A549 (cell line): ENCODE measurements at regions of chr9 and their contacts with region 1.

Region 1: GRCh38 chr9:124537926-124538325 is 30.7 kb upstream of the NR5A1 start:
- DNase-seq: no peak
- ATAC-seq: no peak
- H3K4me3 ChIP-seq: no peak overlapping the region
- H3K27ac ChIP-seq: no peak overlapping the region
- H3K4me1 ChIP-seq: no peaks in the 10 kb centered on the region
- CTCF ChIP-seq: no peak
- EP300 ChIP-seq: no peak
- POLR2A ChIP-seq: no peak
- RAD21 ChIP-seq: no peak

Region 2: DNA sequence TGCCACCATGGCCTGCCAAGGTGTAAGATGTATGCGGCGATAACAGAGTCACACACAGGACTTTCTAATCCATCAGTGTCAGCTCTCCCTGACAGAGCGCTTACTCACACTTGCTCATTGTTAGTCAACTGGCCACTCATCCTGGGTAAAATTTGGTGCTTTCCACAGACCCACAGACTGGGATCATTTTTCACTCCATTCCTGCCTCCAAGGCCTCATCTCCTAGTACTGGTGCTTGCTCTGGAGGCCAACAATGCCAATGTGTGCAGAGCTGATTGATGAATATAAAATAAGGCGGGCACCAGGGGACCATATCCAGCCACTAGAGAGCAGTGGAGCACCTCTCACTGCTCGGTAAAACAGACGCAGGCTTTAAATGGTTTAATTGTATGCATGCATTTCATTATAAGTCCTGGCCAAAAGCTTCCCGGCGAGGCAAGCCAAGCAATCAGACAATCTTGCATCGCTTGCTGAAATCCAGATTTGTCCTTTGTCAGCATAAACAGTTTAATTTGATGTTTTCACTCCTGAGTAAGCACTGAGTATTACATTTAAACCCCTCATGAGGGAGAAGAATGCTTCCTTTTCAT is 145.0 kb before region 1 on chr9:
- CTCF ChIA-PET with region 1: interaction called, 29 read pairs
- POLR2A ChIA-PET with region 1: no interaction called
- DNase-seq: peak; percentile 87 to 89
- ATAC-seq: peak; percentile 88
- H3K4me3 ChIP-seq: 0 out of 3 replicates have a peak overlapping the region, but pooled peaks have one; percentile 6
- H3K27ac ChIP-seq: peak overlapping the region; percentile 68 to 84
- H3K4me1 ChIP-seq: peaks cover 69% of the 10 kb centered on the region
- CTCF ChIP-seq: peak; percentile 56
- EP300 ChIP-seq: peak in 1 of 2 experiments; percentile 68; a peak in 2 of 5 replicates
- POLR2A ChIP-seq: no peak
- RAD21 ChIP-seq: peak; percentile 58 to 70; a peak in 4 of 5 replicates

Region 3: GRCh38 chr9:124503713-124504529 is 34.0 kb before region 1 on chr9:
- CTCF ChIA-PET with region 1: interaction called, 16 read pairs
- POLR2A ChIA-PET with region 1: no interaction called
- DNase-seq: no peak
- ATAC-seq: peak in 1 of 2 experiments; percentile 12; a peak in 3 of 6 replicates
- H3K4me3 ChIP-seq: peak overlapping the region; percentile 41
- H3K27ac ChIP-seq: peak overlapping the region in 1 of 2 experiments; percentile 47; a peak in 3 of 6 replicates
- H3K4me1 ChIP-seq: 0 out of 3 replicates have a peak, but pooled peaks cover 3% of the 10 kb centered on the region
- CTCF ChIP-seq: no peak
- EP300 ChIP-seq: no peak
- POLR2A ChIP-seq: no peak
- RAD21 ChIP-seq: no peak

Region 4: DNA sequence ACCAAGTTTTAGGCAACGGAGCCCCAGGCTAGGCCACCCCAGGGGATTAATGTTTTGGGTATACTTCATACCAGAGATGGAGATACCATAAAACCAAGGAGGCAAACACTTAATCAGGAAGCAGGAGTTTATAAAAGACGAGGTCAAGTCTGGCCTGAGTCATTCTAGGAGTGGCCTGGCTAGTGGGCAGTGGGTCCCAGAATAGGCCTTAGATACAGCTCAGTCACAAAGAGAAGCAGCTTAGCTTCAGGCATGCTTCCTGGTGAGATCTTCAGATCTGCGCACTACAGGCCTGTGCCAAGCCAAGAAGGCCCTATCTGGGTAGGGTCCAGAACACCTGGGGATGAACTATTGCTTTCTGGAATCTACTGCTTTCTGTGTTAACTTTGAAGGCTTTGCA is 10.1 kb before region 1 on chr9:
- CTCF ChIA-PET with region 1: interaction called, 99 read pairs
- POLR2A ChIA-PET with region 1: no interaction called
- DNase-seq: no peak
- ATAC-seq: peak in 1 of 2 experiments; percentile 46; a peak in 2 of 6 replicates
- H3K4me3 ChIP-seq: no peak overlapping the region
- H3K27ac ChIP-seq: no peak overlapping the region
- H3K4me1 ChIP-seq: no peaks in the 10 kb centered on the region
- CTCF ChIP-seq: no peak
- EP300 ChIP-seq: no peak
- POLR2A ChIP-seq: no peak
- RAD21 ChIP-seq: no peak

Region 5: GRCh38 chr9:124574534-124575341 is 36.8 kb after region 1 on chr9:
- CTCF ChIA-PET with region 1: interaction called, 11 read pairs
- POLR2A ChIA-PET with region 1: no interaction called
- DNase-seq: peak in 1 of 2 experiments; percentile 20
- ATAC-seq: peak; percentile 47 to 57; a peak in 2 of 6 replicates
- H3K4me3 ChIP-seq: no peak overlapping the region
- H3K27ac ChIP-seq: no peak overlapping the region
- H3K4me1 ChIP-seq: peaks cover 18% of the 10 kb centered on the region; the same call in 2 of the 3 replicates
- CTCF ChIP-seq: no peak
- EP300 ChIP-seq: no peak
- POLR2A ChIP-seq: no peak
- RAD21 ChIP-seq: no peak

Region 6: GRCh38 chr9:124593200-124593599 is 55.3 kb after region 1 on chr9:
- CTCF ChIA-PET with region 1: no interaction called
- POLR2A ChIA-PET with region 1: no interaction called
- DNase-seq: no peak
- ATAC-seq: no peak
- H3K4me3 ChIP-seq: no peak overlapping the region
- H3K27ac ChIP-seq: no peak overlapping the region
- H3K4me1 ChIP-seq: peaks cover 21% of the 10 kb centered on the region; the same call in 2 of the 3 replicates
- CTCF ChIP-seq: no peak
- EP300 ChIP-seq: no peak
- POLR2A ChIP-seq: no peak
- RAD21 ChIP-seq: no peak

Region 7: GRCh38 chr9:124800306-124801259 is 262.7 kb after region 1 on chr9:
- CTCF ChIA-PET with region 1: no interaction called
- POLR2A ChIA-PET with region 1: no interaction called
- DNase-seq: no peak
- ATAC-seq: no peak
- H3K4me3 ChIP-seq: no peak overlapping the region
- H3K27ac ChIP-seq: no peak overlapping the region
- H3K4me1 ChIP-seq: 0 out of 3 replicates have a peak, but pooled peaks cover 5% of the 10 kb centered on the region
- CTCF ChIP-seq: no peak
- EP300 ChIP-seq: no peak
- POLR2A ChIP-seq: no peak
- RAD21 ChIP-seq: no peak